ENCODE measurements at regions of chr2 and their contacts with region 1.

Region 1: GRCh38 chr2:182763311-182763912 is 47.4 kb downstream of the DNAJC10 start:
- DNase-seq: peak; percentile 23 to 68 (median 30)
- ATAC-seq: peak; percentile 87
- H3K4me3 ChIP-seq: no peak overlapping the region
- H3K27ac ChIP-seq: no peak overlapping the region
- H3K4me1 ChIP-seq: no peaks in the 10 kb centered on the region
- H3K27me3 ChIP-seq: no peaks in the 10 kb centered on the region
- CTCF ChIP-seq: peak; percentile 64 to 72 (median 70)
- EP300 ChIP-seq: no peak
- POLR2A ChIP-seq: no peak
- RAD21 ChIP-seq: peak; percentile 42 to 67

Region 2: DNA sequence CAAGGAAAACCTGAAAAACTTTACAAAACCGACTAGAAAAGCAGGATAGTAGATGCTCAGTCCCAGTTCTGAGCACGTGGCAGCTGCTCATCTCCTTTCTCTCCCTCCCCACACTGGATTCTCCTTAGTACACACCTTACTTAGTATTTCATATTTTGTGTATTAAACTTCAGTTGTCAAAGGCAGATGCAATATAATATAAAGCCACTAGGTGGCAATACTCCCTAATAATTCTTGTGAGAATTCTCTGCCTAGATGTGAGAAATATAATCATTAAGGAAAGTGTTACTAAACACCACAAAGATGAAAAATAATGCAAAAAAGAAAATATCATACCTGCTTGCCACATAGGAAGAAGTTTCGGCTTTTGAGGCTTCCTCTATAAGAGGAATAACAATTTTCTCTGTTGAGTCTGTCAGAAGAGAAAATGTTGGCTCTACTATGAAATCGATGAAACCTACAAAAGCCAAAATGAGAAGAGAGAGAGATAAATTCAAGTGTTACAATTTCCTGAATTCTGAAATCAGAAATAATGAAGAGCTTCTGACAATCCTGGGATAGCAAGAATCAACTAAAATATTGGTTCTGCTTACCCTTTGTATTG is 577.2 kb before region 1 on chr2:
- CTCF ChIA-PET with region 1: no interaction called
- POLR2A ChIA-PET with region 1: no interaction called
- in situ Hi-C with region 1: no loop called
- intact Hi-C with region 1: loop called (anchors 10 kb)
- DNase-seq: peak; percentile 13 to 51 (median 16)
- ATAC-seq: peak; percentile 83
- H3K4me3 ChIP-seq: no peak overlapping the region
- H3K27ac ChIP-seq: no peak overlapping the region
- H3K4me1 ChIP-seq: no peaks in the 10 kb centered on the region
- H3K27me3 ChIP-seq: no peaks in the 10 kb centered on the region
- CTCF ChIP-seq: peak; percentile 57 to 88 (median 63); a peak in 5 of 6 replicates
- EP300 ChIP-seq: no peak
- POLR2A ChIP-seq: no peak
- RAD21 ChIP-seq: peak; percentile 89 to 90

Region 3: DNA sequence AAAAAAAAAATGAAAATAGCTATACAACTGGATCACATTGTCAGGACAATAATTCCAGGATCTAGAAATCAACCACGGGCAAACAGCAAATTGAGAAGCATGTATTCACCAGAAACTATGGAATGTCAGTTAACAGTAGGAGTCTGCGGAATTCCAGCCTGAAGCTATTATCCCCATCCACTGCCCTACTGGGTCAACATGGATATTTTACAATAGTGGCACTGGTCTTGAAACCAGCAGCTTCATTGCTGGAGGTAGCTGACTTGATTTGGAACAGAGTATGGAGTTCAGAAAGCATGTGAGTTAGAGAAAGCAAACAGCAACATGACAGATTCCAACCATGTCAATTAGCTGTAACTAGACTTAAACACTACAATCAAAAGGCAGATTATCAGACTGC is 280.9 kb before region 1 on chr2:
- CTCF ChIA-PET with region 1: no interaction called
- POLR2A ChIA-PET with region 1: no interaction called
- in situ Hi-C with region 1: no loop called
- intact Hi-C with region 1: no loop called
- DNase-seq: no peak
- ATAC-seq: no peak
- H3K4me3 ChIP-seq: no peak overlapping the region
- H3K27ac ChIP-seq: no peak overlapping the region
- H3K4me1 ChIP-seq: no peaks in the 10 kb centered on the region
- H3K27me3 ChIP-seq: no peaks in the 10 kb centered on the region
- CTCF ChIP-seq: no peak
- EP300 ChIP-seq: no peak
- POLR2A ChIP-seq: no peak
- RAD21 ChIP-seq: no peak

Region 4: DNA sequence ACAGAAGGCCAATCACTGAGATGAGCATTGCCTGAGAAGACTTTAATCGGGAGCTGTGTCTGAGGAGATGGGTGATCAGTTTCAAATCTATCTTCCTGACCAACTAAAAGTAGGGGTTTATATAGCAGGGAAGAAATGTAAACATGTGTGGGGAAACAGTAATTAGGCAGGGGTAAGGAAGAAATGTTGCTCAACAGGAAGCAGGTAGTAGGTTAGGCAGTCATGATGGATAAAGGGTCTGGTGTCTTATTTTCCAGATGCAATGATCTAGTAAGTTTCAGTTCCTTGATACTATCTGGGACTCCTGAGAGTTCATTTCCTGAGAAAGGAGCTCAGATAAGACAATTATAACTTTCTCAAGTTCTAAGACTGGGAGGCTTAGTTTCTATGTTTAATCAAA is 81.2 kb before region 1 on chr2:
- CTCF ChIA-PET with region 1: no interaction called
- POLR2A ChIA-PET with region 1: no interaction called
- in situ Hi-C with region 1: no loop called
- intact Hi-C with region 1: no loop called
- DNase-seq: no peak
- ATAC-seq: no peak
- H3K4me3 ChIP-seq: no peak overlapping the region
- H3K27ac ChIP-seq: no peak overlapping the region
- H3K4me1 ChIP-seq: no peaks in the 10 kb centered on the region; a peak in 1 of 5 replicates
- H3K27me3 ChIP-seq: no peaks in the 10 kb centered on the region
- CTCF ChIP-seq: no peak
- EP300 ChIP-seq: no peak
- POLR2A ChIP-seq: no peak
- RAD21 ChIP-seq: no peak

Region 5: DNA sequence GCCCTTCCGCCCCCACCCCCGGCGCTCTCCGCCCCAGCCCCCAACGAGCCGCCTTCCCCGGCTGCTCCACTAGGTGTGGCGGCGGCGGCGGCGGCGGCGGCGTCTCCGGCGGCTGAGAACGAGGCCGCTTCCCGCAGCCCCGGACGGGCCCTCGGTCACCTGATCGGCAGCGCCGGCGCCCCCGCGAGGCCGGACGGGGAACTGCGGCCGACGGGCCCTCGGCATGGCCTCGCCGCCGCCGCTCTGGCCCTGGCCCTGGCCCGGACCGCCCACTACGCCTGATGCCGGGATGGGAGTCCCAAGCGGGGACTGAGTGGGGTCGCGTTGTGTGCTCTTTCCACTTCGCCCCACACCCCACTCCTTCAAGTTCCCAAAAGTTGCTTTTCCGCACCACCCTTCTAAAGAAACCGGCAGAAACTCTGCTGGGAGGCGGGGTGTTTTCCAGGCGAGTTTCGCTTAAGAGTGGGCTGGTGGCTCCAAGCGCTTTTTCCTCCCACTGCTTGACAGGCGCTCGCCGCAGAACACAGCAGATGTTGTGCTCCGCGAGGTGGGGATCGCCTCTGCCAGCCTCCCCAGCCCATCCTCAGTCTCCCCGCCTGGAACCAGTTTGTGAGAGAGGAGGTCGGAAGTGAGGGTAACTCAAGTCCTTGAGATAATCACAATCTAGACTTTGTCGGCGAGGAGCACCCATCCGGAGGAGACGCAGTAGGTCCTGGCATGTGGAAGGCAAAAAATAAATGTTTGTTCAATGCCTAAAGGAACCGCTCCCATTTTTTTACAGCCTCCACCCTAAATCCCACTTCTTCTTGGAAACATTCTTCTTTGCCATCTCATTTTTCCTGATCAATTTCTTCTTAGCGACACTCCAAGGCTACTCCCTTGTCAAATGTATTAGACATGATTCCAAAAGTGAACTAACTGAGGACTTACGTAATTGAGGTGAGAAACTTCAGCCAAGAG is 275.2 kb after region 1 on chr2 and contains the start of gene NCKAP1:
- CTCF ChIA-PET with region 1: no interaction called
- POLR2A ChIA-PET with region 1: no interaction called
- in situ Hi-C with region 1: no loop called
- intact Hi-C with region 1: no loop called
- DNase-seq: peak; percentile 91 to 95 (median 92)
- ATAC-seq: peak; percentile 77
- H3K4me3 ChIP-seq: peak within 1 kb of the TSS; percentile 76
- H3K27ac ChIP-seq: peak within 1 kb of the TSS; percentile 74
- H3K4me1 ChIP-seq: peaks cover 8 to 13% of the 10 kb centered on the region in 2 experiments; a peak in 3 of 5 replicates
- H3K27me3 ChIP-seq: no peaks in the 10 kb centered on the region
- CTCF ChIP-seq: peak; percentile 77 to 93 (median 80)
- EP300 ChIP-seq: no peak; the same call in 1 of the 2 replicates
- POLR2A ChIP-seq: peak; percentile 84
- RAD21 ChIP-seq: peak; percentile 57 to 65
- polyA plus RNA-seq, gene NCKAP1: 34.0 to 35.1 TPM

Region 6: DNA sequence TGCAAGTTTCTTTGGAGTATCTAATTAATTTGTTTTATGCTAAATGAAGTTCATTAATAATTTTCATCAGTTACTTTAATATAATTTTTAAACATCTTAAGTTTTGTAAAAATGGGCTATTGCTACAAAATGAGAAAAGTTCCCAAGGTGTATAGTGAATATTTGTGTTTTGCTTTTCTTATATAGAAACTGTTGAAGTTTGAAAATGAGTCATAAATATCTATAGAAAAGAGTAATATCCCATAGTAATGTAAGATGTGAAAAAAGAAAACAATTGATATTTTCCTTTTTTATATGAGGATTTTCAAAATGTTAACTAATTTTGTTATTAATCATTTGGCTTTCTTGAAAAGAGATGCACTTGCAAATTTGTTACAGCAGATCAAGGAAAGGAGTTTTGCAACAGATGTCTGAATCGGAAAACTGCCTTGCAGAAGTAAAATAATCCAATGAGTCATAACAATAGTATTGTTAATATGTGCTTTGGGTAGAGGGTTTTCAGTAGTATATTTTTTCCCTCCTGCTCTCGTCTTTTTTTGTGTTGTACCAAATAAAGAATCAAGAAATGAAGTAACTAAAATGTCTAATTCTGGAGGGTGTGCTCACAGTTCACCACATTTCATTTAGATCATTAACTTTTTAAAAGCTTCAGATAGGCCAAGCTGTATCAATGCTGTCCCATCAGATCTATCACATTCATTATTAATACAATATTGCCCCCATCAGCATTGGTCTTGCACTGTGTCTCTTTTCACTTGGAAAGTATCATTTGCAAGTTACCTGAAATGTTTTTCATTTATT is 330.6 kb after region 1 on chr2:
- CTCF ChIA-PET with region 1: no interaction called
- POLR2A ChIA-PET with region 1: no interaction called
- in situ Hi-C with region 1: no loop called
- intact Hi-C with region 1: loop called (anchors 10 kb)
- DNase-seq: no peak
- ATAC-seq: peak; percentile 16; the same call in 1 of the 3 replicates
- H3K4me3 ChIP-seq: no peak overlapping the region
- H3K27ac ChIP-seq: no peak overlapping the region
- H3K4me1 ChIP-seq: peaks cover 0 to 3% of the 10 kb centered on the region in 2 experiments; a peak in 2 of 5 replicates
- H3K27me3 ChIP-seq: no peaks in the 10 kb centered on the region
- CTCF ChIP-seq: peak in 1 of 3 experiments; percentile 31; a peak in 1 of 6 replicates
- EP300 ChIP-seq: no peak
- POLR2A ChIP-seq: no peak
- RAD21 ChIP-seq: peak in 1 of 2 experiments; percentile 45; a peak in 2 of 4 replicates